Caco-2 (cell line): ENCODE measurements at regions of chr5 and their contacts with region 1.

Region 1: GRCh38 chr5:64147849-64148441 is 17.7 kb upstream of the RNF180 start:
- DNase-seq: peak; percentile 46 to 56
- H3K4me3 ChIP-seq: no peak overlapping the region
- H3K4me3 Mint-ChIP-seq: no peak overlapping the region
- H3K27ac Mint-ChIP-seq: no peak overlapping the region
- H3K4me1 ChIP-seq: no peaks in the 10 kb centered on the region
- H3K4me1 Mint-ChIP-seq: no peaks in the 10 kb centered on the region
- H3K27me3 ChIP-seq: no peaks in the 10 kb centered on the region
- H3K27me3 Mint-ChIP-seq: no peaks in the 10 kb centered on the region
- CTCF ChIP-seq: peak; percentile 81 to 85

Region 2: DNA sequence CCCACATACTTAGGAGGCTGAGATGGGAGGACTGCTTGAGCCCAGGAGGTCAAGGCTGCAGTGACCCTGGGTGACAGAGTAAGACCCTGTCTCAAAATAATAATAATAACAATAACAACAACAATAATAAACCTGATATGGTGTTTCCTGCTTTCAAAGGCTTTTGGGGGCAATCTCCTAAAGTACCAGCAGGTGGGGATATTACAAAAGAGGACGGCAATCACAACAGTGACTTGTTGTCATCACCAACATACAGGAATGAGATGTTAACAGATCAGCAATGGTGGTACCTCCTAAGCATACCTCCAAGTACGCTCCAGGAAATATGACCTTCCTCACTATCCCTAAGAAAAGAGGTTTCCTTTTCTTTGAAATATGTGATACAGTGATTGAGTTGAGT is 73.4 kb before region 1 on chr5:
- CTCF ChIA-PET with region 1: no interaction called
- POLR2A ChIA-PET with region 1: no interaction called
- intact Hi-C with region 1: loop called (anchors 1 kb)
- DNase-seq: peak in 1 of 2 experiments; percentile 52
- H3K4me3 ChIP-seq: no peak overlapping the region
- H3K4me3 Mint-ChIP-seq: no peak overlapping the region
- H3K27ac Mint-ChIP-seq: no peak overlapping the region
- H3K4me1 ChIP-seq: no peaks in the 10 kb centered on the region
- H3K4me1 Mint-ChIP-seq: no peaks in the 10 kb centered on the region
- H3K27me3 ChIP-seq: no peaks in the 10 kb centered on the region
- H3K27me3 Mint-ChIP-seq: no peaks in the 10 kb centered on the region
- CTCF ChIP-seq: peak; percentile 46 to 70

Region 3: GRCh38 chr5:64108675-64109074 is 39.3 kb before region 1 on chr5:
- CTCF ChIA-PET with region 1: no interaction called
- POLR2A ChIA-PET with region 1: no interaction called
- intact Hi-C with region 1: no loop called
- DNase-seq: no peak
- H3K4me3 ChIP-seq: no peak overlapping the region
- H3K4me3 Mint-ChIP-seq: no peak overlapping the region
- H3K27ac Mint-ChIP-seq: no peak overlapping the region
- H3K4me1 ChIP-seq: no peaks in the 10 kb centered on the region
- H3K4me1 Mint-ChIP-seq: no peaks in the 10 kb centered on the region
- H3K27me3 ChIP-seq: no peaks in the 10 kb centered on the region
- H3K27me3 Mint-ChIP-seq: no peaks in the 10 kb centered on the region
- CTCF ChIP-seq: no peak

Region 4: DNA sequence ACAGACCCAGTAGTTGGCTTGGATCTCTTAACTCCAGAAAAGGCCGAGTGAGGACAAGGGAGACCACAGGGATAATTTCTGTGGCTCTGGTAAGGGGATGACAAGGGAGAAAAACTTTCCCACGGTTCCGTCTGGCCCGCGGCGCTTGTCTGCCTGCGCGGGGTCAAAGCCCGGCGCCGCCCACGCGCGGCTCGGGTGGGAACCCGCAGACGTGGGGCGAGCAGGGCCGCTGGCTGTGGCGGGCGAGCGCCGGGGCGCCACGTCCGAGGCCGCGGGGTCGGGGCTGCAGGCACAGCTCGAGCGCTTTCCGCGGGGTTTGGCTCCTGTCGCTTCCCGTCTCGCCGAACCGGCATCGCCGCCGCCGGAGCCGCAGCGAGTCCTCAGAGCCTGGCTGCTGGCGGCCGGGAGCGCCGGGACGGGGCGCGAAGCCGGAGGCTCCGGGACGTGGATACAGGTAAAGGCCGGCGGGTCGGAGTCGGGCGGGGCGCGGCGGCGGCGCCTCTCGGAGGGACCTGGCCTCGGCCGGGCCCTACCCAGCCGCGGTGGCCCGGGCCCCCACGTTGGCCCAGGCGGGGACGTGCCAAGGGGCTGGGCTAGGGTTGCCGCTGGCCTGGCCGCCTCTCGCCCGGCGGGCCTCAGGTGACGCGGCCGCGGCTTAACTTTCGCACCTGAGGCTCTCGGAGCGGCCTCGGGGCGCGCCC is 17.7 kb after region 1 on chr5 and contains the start of gene RNF180:
- CTCF ChIA-PET with region 1: no interaction called
- POLR2A ChIA-PET with region 1: no interaction called
- intact Hi-C with region 1: loop called (anchors 1 kb)
- DNase-seq: peak; percentile 39 to 55
- H3K4me3 ChIP-seq: peak within 1 kb of the TSS; percentile 33
- H3K4me3 Mint-ChIP-seq: peak within 1 kb of the TSS; percentile 82
- H3K27ac Mint-ChIP-seq: no peak within 1 kb of the TSS
- H3K4me1 ChIP-seq: no peaks in the 10 kb centered on the region
- H3K4me1 Mint-ChIP-seq: peaks cover 5% of the 10 kb centered on the region
- H3K27me3 ChIP-seq: peaks cover 3% of the 10 kb centered on the region
- H3K27me3 Mint-ChIP-seq: peaks cover 31% of the 10 kb centered on the region
- CTCF ChIP-seq: no peak
- total RNA-seq, gene RNF180: 0.23 and 0.61 TPM in 2 replicates

Region 5: GRCh38 chr5:64180661-64181343 is 32.9 kb after region 1 on chr5:
- CTCF ChIA-PET with region 1: no interaction called
- POLR2A ChIA-PET with region 1: no interaction called
- intact Hi-C with region 1: no loop called
- DNase-seq: no peak
- H3K4me3 ChIP-seq: no peak overlapping the region
- H3K4me3 Mint-ChIP-seq: no peak overlapping the region
- H3K27ac Mint-ChIP-seq: no peak overlapping the region
- H3K4me1 ChIP-seq: no peaks in the 10 kb centered on the region
- H3K4me1 Mint-ChIP-seq: no peaks in the 10 kb centered on the region
- H3K27me3 ChIP-seq: no peaks in the 10 kb centered on the region
- H3K27me3 Mint-ChIP-seq: no peaks in the 10 kb centered on the region
- CTCF ChIP-seq: no peak

Region 6: DNA sequence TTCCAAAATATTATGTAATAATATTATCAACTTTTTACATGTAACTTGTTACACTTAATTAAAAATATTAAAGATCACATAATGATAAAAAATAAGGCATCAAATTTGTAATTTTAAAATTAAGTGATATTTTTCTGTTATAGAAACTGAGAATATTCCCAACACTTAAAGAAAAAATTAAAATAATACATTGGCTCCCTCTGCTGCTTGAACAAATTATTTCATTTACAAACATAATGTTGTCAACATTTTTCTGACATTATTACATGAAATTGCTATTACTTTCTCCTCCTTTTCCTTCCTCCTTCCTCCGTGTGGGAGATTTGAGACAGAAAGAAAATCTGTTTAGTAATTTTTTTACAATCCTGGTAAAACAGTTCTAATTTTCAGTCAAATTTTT is 60.0 kb after region 1 on chr5:
- CTCF ChIA-PET with region 1: interaction called, 4 read pairs
- POLR2A ChIA-PET with region 1: no interaction called
- intact Hi-C with region 1: loop called (anchors 1 kb)
- DNase-seq: no peak
- H3K4me3 ChIP-seq: no peak overlapping the region
- H3K4me3 Mint-ChIP-seq: no peak overlapping the region
- H3K27ac Mint-ChIP-seq: no peak overlapping the region
- H3K4me1 ChIP-seq: no peaks in the 10 kb centered on the region
- H3K4me1 Mint-ChIP-seq: no peaks in the 10 kb centered on the region
- H3K27me3 ChIP-seq: no peaks in the 10 kb centered on the region
- H3K27me3 Mint-ChIP-seq: peaks cover 5% of the 10 kb centered on the region
- CTCF ChIP-seq: peak in 1 of 2 experiments; percentile 45